ENCODE measurements at regions of chr2 and their contacts with region 1.

Region 1: DNA sequence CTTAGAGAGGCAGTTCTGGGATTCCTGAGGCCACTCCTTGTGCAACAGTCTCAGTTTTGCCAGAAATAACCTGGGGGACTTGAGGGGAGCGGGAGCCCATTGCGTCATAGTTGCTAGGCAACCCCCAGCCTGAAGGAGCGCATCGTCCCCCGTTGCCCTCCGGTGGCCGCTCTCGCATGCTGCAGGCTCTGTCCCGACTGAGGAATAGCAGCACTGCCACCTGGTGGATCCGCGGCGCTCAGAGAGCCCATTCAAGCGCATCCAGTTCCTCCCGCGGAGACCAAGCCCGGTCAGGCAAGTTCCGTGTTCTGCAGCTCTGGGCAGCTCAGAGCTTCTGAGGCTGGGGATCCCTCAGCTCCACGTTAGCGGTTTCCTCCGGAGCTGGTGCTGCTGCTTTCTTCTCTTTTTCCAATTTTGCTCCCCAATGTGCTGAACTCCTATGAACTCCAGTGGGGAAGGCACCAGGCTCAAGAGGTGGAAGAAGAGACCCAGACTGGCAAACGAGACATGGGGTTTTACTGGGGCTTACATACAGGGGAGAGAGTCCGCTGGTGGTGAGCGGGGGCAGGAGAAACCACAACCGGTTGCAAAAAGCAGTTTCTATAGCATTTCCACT is 15.1 kb downstream of the SLC4A3 start:
- DNase-seq: peak; percentile 79
- H3K4me3 ChIP-seq: no peak overlapping the region
- H3K27me3 ChIP-seq: no peaks in the 10 kb centered on the region
- CTCF ChIP-seq: peak; percentile 100

Region 2: GRCh38 chr2:219498280-219499057 is 144.1 kb before region 1 on chr2 and contains the start of gene GMPPA:
- CTCF ChIA-PET with region 1: no interaction called
- POLR2A ChIA-PET with region 1: no interaction called
- DNase-seq: peak; percentile 99
- H3K4me3 ChIP-seq: peak within 1 kb of the TSS; percentile 90
- H3K27me3 ChIP-seq: no peaks in the 10 kb centered on the region
- CTCF ChIP-seq: 0 out of 2 replicates have a peak, but pooled peaks have one; percentile 4
- polyA plus RNA-seq, gene GMPPA: 123 and 171 TPM in 2 replicates

Region 3: DNA sequence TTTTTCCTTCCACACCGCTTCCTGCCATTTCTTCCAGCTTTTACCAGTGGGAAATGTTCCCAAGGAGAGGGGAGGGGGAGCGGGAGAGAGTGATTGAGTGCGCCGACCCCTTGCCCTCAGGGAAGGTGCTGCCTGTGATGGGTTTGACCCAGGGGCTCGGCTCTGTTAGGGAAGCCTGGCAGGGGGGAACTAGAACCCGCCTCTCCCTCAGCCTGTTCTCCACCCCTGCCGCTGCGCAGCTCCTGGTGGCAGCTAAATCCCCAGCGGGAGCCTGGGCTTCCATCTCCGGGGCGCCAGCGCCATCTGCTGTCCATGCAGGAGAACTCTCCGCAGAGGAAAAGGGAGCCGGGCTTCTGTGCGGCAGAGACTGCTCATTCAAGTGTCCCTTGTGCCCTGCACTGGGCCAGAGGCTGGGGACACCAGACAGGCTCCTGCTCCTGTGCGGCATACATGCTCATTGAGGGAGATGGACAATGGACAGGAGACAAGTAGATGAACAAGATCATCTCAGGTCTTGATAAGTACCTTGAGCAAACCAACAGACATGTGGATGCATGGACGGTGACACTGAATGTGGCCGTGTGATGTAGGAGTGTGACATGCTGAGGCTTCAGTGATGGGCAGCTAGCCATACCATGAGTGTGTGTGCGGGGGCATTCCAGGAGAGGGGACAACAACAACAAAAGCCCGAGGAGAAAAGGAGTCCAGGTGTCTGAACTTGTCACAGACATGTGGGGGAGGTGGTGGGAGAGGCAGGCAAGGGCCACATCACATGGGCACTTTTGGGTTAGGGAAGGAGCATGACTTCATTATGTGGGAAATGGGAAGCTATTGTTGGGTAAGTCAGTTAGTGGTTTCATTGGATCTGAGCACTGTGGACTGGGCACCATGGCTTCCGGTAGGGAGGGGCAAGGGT is 112.3 kb before region 1 on chr2:
- CTCF ChIA-PET with region 1: interaction called, 11 read pairs
- POLR2A ChIA-PET with region 1: no interaction called
- DNase-seq: no peak
- H3K4me3 ChIP-seq: peak overlapping the region; percentile 11; the same call in 1 of the 2 replicates
- H3K27me3 ChIP-seq: peaks cover 13% of the 10 kb centered on the region
- CTCF ChIP-seq: peak; percentile 96

Region 4: DNA sequence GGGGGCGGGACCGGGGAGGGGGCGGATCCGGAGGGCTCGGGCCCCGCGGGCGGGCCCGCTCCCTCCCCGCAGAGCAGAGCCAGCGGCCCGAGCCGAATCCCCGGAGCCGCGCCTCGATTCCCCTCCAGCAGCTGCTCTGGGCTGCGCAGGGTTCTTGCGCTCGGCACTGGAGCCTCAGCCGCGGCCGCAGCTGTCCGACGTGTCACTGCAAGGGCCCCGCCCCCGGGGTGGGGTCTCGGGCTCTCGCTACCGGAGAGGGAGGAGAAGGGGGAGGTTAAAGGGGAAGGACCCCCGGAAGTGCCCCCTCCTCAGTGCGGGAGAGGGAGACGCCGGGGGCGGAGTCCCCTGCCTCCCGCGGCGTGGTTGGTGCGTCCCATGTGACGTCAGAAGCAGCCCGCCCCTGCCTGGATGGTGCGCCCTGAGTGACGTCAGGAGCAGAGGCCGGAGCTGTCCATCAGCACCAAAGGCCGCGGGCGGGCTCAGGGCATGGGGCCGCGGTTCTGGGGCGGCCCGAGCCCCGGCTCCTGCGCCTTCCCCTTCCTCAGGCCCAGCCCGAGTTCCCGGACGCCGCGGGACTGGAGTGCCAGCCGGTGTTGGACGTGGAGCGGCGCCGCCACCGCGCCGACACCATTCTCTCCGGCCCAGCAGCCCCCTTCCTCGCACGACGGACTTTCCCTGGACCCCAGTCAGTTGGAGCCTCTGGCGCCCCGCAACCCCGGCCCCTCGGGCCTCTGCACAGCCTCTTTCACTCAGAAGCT is 98.8 kb before region 1 on chr2 and contains the starts of genes CHPF and TMEM198:
- CTCF ChIA-PET with region 1: interaction called, 20 read pairs
- POLR2A ChIA-PET with region 1: no interaction called
- DNase-seq: peak; percentile 86
- H3K4me3 ChIP-seq: peak within 1 kb of the TSS; percentile 84
- H3K27me3 ChIP-seq: no peaks in the 10 kb centered on the region
- CTCF ChIP-seq: no peak
- polyA plus RNA-seq, gene CHPF: 65.0 and 119 TPM in 2 replicates
- polyA plus RNA-seq, gene TMEM198: 2.5 and 4.0 TPM in 2 replicates

Region 5: GRCh38 chr2:219571311-219572236 is 71.0 kb before region 1 on chr2 and contains the start of gene OBSL1:
- CTCF ChIA-PET with region 1: interaction called, 14 read pairs
- POLR2A ChIA-PET with region 1: no interaction called
- DNase-seq: no peak
- H3K4me3 ChIP-seq: peak within 1 kb of the TSS; percentile 76
- H3K27me3 ChIP-seq: peaks cover 5% of the 10 kb centered on the region
- CTCF ChIP-seq: no peak
- polyA plus RNA-seq, gene OBSL1: 47.2 and 75.9 TPM in 2 replicates

Region 6: GRCh38 chr2:219658196-219658846 is 15.7 kb after region 1 on chr2:
- CTCF ChIA-PET with region 1: interaction called, 20 read pairs
- POLR2A ChIA-PET with region 1: no interaction called
- DNase-seq: no peak
- H3K4me3 ChIP-seq: no peak overlapping the region
- H3K27me3 ChIP-seq: no peaks in the 10 kb centered on the region; the same call in 1 of the 2 replicates
- CTCF ChIP-seq: no peak

Measured in BJ (cell line).